ENCODE measurements at regions of chr7 and their contacts with region 1.

Region 1: DNA sequence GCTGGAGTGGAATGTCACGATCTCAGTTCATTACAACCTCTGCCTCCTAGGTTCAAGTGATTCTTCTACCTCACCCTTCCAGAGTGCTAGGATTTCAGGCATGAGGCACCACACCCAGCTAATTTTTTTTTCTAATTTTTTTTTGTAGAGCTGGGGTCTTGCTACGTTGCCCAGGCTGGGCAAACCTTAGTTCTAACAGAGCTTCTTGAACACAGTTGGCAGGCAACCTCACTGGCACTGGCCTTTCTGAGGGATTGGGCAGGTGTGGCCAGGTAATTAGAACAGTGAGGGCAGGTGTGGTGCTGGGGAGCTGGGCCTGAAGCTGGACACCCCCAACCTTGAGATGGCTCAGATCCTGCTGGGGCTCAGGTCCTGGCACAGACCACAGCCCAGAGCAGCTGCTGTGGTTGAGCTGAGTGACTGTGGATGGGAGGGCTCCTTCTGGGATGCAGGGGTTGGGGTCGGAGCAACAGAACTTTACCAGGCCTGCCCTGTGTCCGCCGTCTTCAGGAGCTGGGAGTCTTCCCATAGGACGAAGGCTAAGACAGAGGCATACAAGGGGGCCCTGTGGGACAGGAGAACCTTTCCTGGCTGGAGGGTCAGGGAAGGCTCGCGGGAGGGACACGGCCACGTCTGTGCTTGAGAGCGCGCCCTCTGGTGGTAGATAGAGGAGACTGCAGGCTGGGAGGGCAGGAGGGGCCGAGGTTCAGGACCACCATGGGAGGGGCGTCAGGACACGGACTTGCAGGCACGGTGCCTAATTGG is 48.2 kb downstream of the COL26A1 start:
- DNase-seq: peak; percentile 60
- ATAC-seq: peak; percentile 90
- H3K4me3 Mint-ChIP-seq: no peak overlapping the region
- H3K27ac Mint-ChIP-seq: no peak overlapping the region
- H3K4me1 Mint-ChIP-seq: peaks cover 6% of the 10 kb centered on the region
- H3K27me3 Mint-ChIP-seq: peaks cover 1% of the 10 kb centered on the region
- CTCF ChIP-seq: peak; percentile 93

Region 2: DNA sequence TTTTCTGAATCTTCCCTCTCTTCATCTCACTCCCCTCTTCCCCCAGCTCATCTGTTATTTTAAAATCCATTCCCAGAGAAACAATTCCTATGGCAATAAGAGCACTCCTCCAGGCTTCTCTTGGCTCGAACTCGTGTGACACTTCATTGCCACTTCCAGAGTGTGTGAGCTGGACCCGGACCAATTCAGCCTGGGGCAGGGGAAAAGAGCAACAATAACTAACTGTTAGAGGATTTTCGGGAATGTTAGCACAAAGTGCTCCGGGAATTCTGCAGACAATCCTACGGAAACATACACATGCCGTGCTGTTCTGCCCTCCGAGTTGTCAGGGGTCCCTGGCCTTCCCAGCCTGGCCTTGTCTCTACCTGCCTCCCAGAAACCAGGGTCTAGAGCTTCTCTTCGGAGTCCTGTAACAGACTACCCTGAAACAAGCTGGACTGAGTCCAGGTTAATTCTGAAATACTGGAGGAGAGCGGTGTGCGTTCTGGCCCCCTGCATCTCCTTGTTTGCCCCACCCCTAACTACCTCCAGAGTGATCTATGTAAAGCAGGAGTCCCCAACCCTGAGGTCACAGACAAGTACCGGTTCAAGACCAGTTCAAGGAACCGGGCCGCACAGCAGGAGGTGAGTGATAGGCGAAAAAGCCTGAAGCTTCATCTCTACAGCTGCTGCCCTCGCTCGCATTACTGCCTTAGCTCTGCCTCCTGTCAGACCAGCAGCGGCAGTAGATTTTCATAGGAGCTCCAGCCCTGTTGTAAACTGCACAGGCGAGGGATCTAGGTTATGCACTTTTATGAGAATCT is 36.9 kb before region 1 on chr7:
- CTCF ChIA-PET with region 1: interaction called, 28 read pairs
- POLR2A ChIA-PET with region 1: no interaction called
- intact Hi-C with region 1: loop called (anchors 5 kb)
- DNase-seq: no peak
- ATAC-seq: no peak
- H3K4me3 Mint-ChIP-seq: no peak overlapping the region
- H3K27ac Mint-ChIP-seq: no peak overlapping the region
- H3K4me1 Mint-ChIP-seq: peaks cover 6% of the 10 kb centered on the region
- H3K27me3 Mint-ChIP-seq: peaks cover 2% of the 10 kb centered on the region
- CTCF ChIP-seq: no peak

Region 3: GRCh38 chr7:101390901-101391301 is 20.0 kb before region 1 on chr7:
- CTCF ChIA-PET with region 1: interaction called, 26 read pairs
- POLR2A ChIA-PET with region 1: no interaction called
- intact Hi-C with region 1: no loop called
- DNase-seq: peak; percentile 74
- ATAC-seq: peak; percentile 92
- H3K4me3 Mint-ChIP-seq: no peak overlapping the region
- H3K27ac Mint-ChIP-seq: peak overlapping the region; percentile 88
- H3K4me1 Mint-ChIP-seq: peaks cover 24% of the 10 kb centered on the region
- H3K27me3 Mint-ChIP-seq: no peaks in the 10 kb centered on the region
- CTCF ChIP-seq: no peak

Region 4: DNA sequence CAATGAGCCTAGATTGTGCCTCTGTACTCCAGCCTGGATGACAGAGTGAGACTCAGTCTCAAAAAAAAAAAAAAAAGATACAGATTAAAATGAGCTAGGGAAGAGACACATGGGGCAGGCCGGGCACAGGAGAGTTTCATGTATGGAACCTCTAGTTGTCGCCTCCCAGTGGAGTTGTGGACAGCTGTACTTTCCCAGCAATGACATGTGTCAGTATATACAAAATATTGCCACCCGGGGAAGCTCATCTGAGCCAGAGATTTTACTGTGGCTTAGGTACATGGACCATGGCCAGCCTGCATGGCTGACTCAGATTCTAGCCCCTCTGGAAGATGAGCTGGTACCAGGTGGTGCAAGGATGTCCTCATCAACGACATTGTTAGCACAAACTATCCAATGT is 39.1 kb after region 1 on chr7:
- CTCF ChIA-PET with region 1: no interaction called
- POLR2A ChIA-PET with region 1: no interaction called
- intact Hi-C with region 1: no loop called
- DNase-seq: no peak
- ATAC-seq: peak; percentile 42
- H3K4me3 Mint-ChIP-seq: no peak overlapping the region
- H3K27ac Mint-ChIP-seq: no peak overlapping the region
- H3K4me1 Mint-ChIP-seq: no peaks in the 10 kb centered on the region
- H3K27me3 Mint-ChIP-seq: no peaks in the 10 kb centered on the region
- CTCF ChIP-seq: no peak

Measured in activated CD8-positive, alpha-beta T cell treated with anti-CD3 and anti-CD28 coated beads for 36 hours (primary cell).